ENCODE measurements at regions of chr6 and their contacts with region 1.

Region 1: GRCh38 chr6:106525111-106525881 is 104.0 kb downstream of the RTN4IP1 start:
- DNase-seq: peak in 1 of 35 experiments; percentile 69
- ATAC-seq: peak; percentile 28 to 46 (median 38)
- H3K4me3 ChIP-seq: peak overlapping the region; percentile 47 to 74
- H3K4me3 Mint-ChIP-seq: peak overlapping the region; percentile 85 to 90 (median 88)
- H3K27ac ChIP-seq: peak overlapping the region; percentile 93
- H3K27ac Mint-ChIP-seq: peak overlapping the region; percentile 95 to 96
- H3K4me1 ChIP-seq: peaks cover 17 to 34% of the 10 kb centered on the region in 2 experiments
- H3K4me1 Mint-ChIP-seq: peaks cover 71 to 74% (median 71%) of the 10 kb centered on the region in 3 donors
- H3K27me3 ChIP-seq: no peaks in the 10 kb centered on the region
- H3K27me3 Mint-ChIP-seq: no peaks in the 10 kb centered on the region

Region 2: DNA sequence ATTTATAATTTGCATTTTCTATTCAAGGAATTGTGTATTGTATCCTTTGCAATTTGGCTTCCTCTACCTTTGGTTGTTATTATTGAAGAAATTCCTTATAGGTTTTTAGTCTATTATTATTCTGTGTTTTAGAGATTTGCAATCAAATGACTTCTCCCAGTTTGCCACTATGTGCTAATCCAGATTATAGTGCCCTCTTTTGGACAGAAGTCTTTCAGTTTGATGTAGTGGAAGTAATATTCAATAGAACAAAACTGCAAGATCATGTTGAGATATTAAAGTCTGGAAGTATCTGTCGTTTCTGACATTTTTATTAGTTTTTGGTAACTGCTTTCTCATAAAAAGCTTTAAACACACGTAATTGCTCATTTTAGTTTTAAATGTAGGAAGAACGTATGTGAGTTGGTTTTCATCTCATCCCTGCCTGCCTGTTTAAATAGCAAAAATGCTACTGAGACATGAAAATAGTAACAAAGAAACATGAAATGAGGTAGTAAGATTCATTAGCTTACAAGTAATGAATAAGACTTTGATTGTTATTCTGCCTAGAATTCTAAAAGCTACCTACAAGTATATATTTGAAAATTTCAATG is 31.2 kb after region 1 on chr6:
- CTCF ChIA-PET with region 1: interaction called, 4 to 5 read pairs
- POLR2A ChIA-PET with region 1: interaction called, 10 to 12 read pairs
- DNase-seq: peak in 1 of 35 experiments; percentile 62
- ATAC-seq: peak; percentile 45 to 73 (median 52)
- H3K4me3 ChIP-seq: no peak overlapping the region
- H3K4me3 Mint-ChIP-seq: no peak overlapping the region
- H3K27ac ChIP-seq: no peak overlapping the region
- H3K27ac Mint-ChIP-seq: peak overlapping the region; percentile 43 to 50
- H3K4me1 ChIP-seq: no peaks in the 10 kb centered on the region
- H3K4me1 Mint-ChIP-seq: peaks cover 9 to 19% (median 14%) of the 10 kb centered on the region in 3 donors
- H3K27me3 ChIP-seq: no peaks in the 10 kb centered on the region
- H3K27me3 Mint-ChIP-seq: no peaks in the 10 kb centered on the region

Measured in T-cell (primary cell).